IMR-90 (cell line): ENCODE measurements at regions of chr2 and their contacts with region 1.

Region 1: GRCh38 chr2:237581751-237582746 is 8.5 kb downstream of the RAB17 start:
- DNase-seq: peak; percentile 71
- ATAC-seq: peak; percentile 92
- H3K4me3 ChIP-seq: no peak overlapping the region
- H3K27ac ChIP-seq: no peak overlapping the region
- H3K4me1 ChIP-seq: no peaks in the 10 kb centered on the region
- H3K27me3 ChIP-seq: peaks cover 4% of the 10 kb centered on the region; the same call in 1 of the 2 replicates
- CTCF ChIP-seq: peak; percentile 66
- POLR2A ChIP-seq: no peak
- RAD21 ChIP-seq: peak; percentile 77

Region 2: GRCh38 chr2:237465515-237466218 is 116.4 kb before region 1 on chr2:
- CTCF ChIA-PET with region 1: no interaction called
- POLR2A ChIA-PET with region 1: no interaction called
- dilution Hi-C with region 1: no loop called
- in situ Hi-C with region 1: no loop called
- intact Hi-C with region 1: no loop called
- DNase-seq: peak; percentile 99
- ATAC-seq: peak; percentile 84
- H3K4me3 ChIP-seq: no peak overlapping the region
- H3K27ac ChIP-seq: peak overlapping the region; percentile 84
- H3K4me1 ChIP-seq: peaks cover 10% of the 10 kb centered on the region
- H3K27me3 ChIP-seq: no peaks in the 10 kb centered on the region
- CTCF ChIP-seq: no peak
- POLR2A ChIP-seq: no peak; the same call in 1 of the 2 replicates
- RAD21 ChIP-seq: peak; percentile 13; the same call in 1 of the 2 replicates

Region 3: GRCh38 chr2:237774802-237775553 is 192.9 kb after region 1 on chr2:
- CTCF ChIA-PET with region 1: no interaction called
- POLR2A ChIA-PET with region 1: no interaction called
- dilution Hi-C with region 1: no loop called
- in situ Hi-C with region 1: no loop called
- intact Hi-C with region 1: loop called (anchors 1 kb)
- DNase-seq: peak; percentile 50
- ATAC-seq: peak; percentile 95
- H3K4me3 ChIP-seq: no peak overlapping the region
- H3K27ac ChIP-seq: no peak overlapping the region
- H3K4me1 ChIP-seq: no peaks in the 10 kb centered on the region
- H3K27me3 ChIP-seq: no peaks in the 10 kb centered on the region
- CTCF ChIP-seq: peak; percentile 59
- POLR2A ChIP-seq: no peak
- RAD21 ChIP-seq: peak; percentile 59